BJ (cell line): ENCODE measurements at regions of chr3 and their contacts with region 1.

Region 1: DNA sequence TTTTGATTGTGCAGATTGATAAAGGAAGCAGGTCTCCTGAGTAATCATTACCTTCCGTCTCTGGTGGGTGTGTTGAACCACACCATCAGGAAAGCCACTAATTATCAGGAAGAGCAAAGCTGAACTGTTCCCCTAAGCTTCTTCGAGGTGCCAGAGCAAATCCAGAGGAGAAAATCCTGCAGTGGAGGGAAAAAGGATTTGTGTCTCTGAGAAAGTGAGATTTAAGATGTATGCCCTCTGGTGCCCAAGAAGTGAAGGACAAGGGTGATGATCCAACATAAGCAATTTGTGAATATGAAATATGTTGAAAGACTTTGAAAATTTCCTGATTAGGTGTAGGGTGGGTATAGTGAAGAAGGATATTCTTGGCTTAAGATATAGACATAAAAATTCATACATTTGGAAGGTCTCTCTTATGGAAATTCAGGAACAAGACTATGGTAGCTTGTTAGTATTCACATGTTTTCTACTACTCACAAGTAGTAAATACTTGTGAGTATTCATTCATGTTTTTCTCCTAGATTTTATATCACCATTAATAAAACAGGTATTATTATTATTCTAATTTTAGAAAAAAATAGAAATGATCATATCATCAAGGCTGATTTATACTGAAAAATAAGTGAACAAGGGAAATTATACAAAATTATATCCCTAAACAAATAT is 34.8 kb downstream of the COMMD2 start:
- DNase-seq: no peak
- H3K4me3 ChIP-seq: no peak overlapping the region
- H3K27me3 ChIP-seq: no peaks in the 10 kb centered on the region
- CTCF ChIP-seq: peak; percentile 74

Region 2: GRCh38 chr3:149512209-149512782 is 205.2 kb before region 1 on chr3:
- CTCF ChIA-PET with region 1: interaction called, 24 read pairs
- POLR2A ChIA-PET with region 1: no interaction called
- DNase-seq: no peak
- H3K4me3 ChIP-seq: no peak overlapping the region
- H3K27me3 ChIP-seq: no peaks in the 10 kb centered on the region
- CTCF ChIP-seq: peak; percentile 86

Region 3: GRCh38 chr3:149536429-149536828 is 181.1 kb before region 1 on chr3:
- CTCF ChIA-PET with region 1: interaction called, 25 read pairs
- POLR2A ChIA-PET with region 1: no interaction called
- DNase-seq: no peak
- H3K4me3 ChIP-seq: no peak overlapping the region
- H3K27me3 ChIP-seq: no peaks in the 10 kb centered on the region
- CTCF ChIP-seq: no peak

Region 4: DNA sequence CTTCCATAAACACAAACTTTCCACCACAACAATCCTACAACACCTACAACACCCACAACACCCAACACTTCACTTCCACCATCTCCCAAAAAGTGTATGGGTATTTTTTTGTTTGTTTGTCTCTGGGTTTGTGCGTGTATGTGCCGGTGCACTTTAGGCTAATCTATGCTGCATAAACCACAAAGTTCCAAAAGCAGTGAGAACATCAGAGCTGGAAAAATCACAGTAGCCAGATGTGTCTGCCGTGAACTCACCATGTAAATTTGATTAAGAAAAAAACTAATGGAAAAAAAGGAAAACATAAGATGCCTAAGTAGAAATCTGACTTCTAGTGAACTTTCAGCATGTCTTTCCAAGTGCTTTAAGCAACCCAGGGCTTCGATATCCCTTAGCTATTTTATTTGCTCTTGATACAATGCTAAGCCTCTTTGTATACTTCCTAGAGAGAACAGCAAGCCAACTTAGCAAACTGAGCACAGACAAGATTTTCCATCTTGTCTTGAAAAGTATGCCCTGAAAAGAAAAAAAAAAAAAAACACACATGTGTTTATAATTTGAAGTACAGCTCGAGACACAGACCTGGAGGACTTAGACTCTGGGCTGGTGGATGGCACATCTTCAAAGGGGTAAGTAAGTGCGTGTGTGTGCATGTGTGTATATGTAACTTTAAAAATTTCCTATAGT is 151.1 kb before region 1 on chr3:
- CTCF ChIA-PET with region 1: interaction called, 16 read pairs
- POLR2A ChIA-PET with region 1: no interaction called
- DNase-seq: no peak
- H3K4me3 ChIP-seq: no peak overlapping the region
- H3K27me3 ChIP-seq: no peaks in the 10 kb centered on the region
- CTCF ChIP-seq: no peak

Region 5: DNA sequence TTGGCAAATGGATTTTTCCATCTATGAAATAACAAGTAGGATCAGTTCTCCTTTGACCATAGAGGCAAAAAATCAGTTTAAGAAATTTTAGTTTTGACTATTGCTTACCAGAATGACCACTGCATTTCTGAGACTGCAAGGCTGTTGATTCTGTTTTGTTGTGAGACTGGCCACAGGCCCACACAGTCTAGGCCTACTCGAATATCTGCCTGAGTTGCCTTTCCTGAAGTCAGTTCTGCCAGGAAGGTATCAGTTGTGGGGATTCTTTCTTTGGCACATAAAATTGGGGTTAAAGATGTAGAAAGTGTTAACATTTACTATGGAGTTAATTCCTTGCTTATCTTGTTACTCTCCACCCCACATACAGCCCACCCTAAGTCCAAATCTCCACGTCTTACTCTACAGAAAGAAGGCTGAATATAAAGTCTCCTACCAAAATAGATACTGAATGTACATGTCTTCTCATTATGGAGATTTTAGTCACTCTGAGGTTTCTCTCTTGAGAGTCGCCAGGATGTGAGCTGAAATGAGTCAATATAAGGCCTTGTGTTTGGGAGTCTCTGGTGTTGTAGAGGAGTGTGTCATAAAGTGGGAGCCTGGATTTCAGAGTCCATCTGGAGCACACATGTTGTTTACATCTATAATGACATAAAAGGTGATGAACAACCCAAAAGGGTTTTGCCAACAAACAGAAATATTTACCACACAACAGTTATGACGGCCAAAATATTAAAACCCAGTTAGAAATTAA is 14.7 kb before region 1 on chr3:
- CTCF ChIA-PET with region 1: interaction called, 25 read pairs
- POLR2A ChIA-PET with region 1: no interaction called
- DNase-seq: peak; percentile 92
- H3K4me3 ChIP-seq: no peak overlapping the region
- H3K27me3 ChIP-seq: no peaks in the 10 kb centered on the region
- CTCF ChIP-seq: no peak

Region 6: DNA sequence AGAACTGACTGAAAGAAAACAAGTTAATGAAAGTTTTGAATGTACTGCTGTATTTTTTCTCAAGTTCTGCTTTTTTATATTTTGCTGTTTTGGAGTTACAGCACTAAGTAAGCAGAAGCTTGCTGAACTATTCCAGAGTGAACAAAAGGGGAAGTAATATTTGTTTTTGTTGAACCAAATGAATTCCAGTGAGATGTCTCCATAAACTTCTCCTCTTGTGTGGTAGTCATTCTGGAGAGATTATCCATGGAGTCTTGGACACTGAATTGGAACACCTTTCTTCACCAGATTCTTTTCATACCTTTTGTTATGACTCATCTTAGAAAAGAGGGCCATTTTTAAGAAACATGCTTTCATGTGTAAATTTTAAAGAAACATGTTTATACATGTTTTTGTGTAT is 66.1 kb after region 1 on chr3:
- CTCF ChIA-PET with region 1: no interaction called
- POLR2A ChIA-PET with region 1: no interaction called
- DNase-seq: no peak
- H3K4me3 ChIP-seq: no peak overlapping the region
- H3K27me3 ChIP-seq: no peaks in the 10 kb centered on the region
- CTCF ChIP-seq: no peak